ENCODE measurements at regions of chr3 and their contacts with region 1.

Region 1: DNA sequence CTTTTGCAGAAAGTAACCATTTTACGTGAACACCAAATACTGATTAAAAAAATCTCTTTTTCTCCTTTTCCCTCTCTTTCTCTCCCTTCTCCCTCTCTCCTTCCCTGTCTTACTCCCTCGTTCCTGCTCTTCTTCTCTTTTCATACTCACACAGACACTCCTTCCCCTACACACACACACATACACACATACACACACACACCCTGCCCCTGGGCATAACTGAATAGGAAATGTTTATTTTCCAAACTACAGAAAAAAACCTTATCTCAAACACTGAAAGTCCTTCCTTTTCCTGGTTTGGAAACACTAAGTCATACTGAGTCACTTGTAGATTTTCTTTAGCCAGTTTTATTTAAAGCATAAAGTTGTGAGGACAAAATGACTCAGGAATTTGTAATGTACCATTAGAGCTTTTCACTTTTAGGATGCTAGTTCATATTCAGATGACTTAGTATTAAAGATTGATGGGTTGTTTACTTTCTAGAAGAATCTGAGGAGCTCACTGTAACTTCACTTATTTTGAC is 62.4 kb downstream of the MBNL1 start:
- DNase-seq: no peak
- ATAC-seq: peak; percentile 47
- H3K4me3 Mint-ChIP-seq: peak overlapping the region; percentile 31
- H3K27ac Mint-ChIP-seq: peak overlapping the region; percentile 93
- H3K4me1 Mint-ChIP-seq: peaks cover 88% of the 10 kb centered on the region
- H3K27me3 Mint-ChIP-seq: no peaks in the 10 kb centered on the region

Region 2: DNA sequence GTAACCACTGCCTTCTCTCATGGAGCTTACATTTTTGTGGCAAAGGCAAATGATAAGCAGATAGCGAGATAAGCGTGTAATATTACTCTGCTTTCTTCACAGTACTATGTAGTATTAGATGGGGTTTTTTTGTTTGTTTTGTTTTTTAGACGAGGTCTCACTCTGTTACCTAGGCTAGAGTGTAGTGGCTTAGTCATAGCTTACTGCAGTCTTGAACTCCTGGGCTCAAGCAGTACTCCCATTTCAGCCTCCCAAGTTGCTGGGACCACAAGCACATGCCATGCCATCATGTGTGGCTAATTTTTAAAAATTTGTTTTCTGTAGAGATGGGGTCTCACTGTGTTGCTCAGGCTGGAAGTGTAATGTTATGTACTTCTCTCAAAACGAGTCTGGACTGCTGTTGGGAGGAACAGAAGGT is 39.4 kb before region 1 on chr3:
- CTCF ChIA-PET with region 1: interaction called, 3 read pairs
- POLR2A ChIA-PET with region 1: no interaction called
- intact Hi-C with region 1: loop called in 1 of 2 experiments (anchors 2 kb)
- DNase-seq: no peak
- ATAC-seq: peak; percentile 64
- H3K4me3 Mint-ChIP-seq: peak overlapping the region; percentile 55
- H3K27ac Mint-ChIP-seq: peak overlapping the region; percentile 68
- H3K4me1 Mint-ChIP-seq: peaks cover 73% of the 10 kb centered on the region
- H3K27me3 Mint-ChIP-seq: no peaks in the 10 kb centered on the region

Region 3: GRCh38 chr3:152298393-152299242 is 32.5 kb before region 1 on chr3:
- CTCF ChIA-PET with region 1: interaction called, 3 read pairs
- POLR2A ChIA-PET with region 1: interaction called, 4 read pairs
- intact Hi-C with region 1: loop called in 1 of 2 experiments (anchors 2 kb)
- DNase-seq: peak; percentile 70
- ATAC-seq: peak; percentile 87
- H3K4me3 Mint-ChIP-seq: peak overlapping the region; percentile 69
- H3K27ac Mint-ChIP-seq: peak overlapping the region; percentile 79
- H3K4me1 Mint-ChIP-seq: peaks cover 75% of the 10 kb centered on the region
- H3K27me3 Mint-ChIP-seq: no peaks in the 10 kb centered on the region

Region 4: GRCh38 chr3:152350139-152350538 is 19.1 kb after region 1 on chr3:
- CTCF ChIA-PET with region 1: interaction called, 4 read pairs
- POLR2A ChIA-PET with region 1: no interaction called
- intact Hi-C with region 1: loop called in 1 of 2 experiments (anchors 2 kb)
- DNase-seq: no peak
- ATAC-seq: peak; percentile 20
- H3K4me3 Mint-ChIP-seq: no peak overlapping the region
- H3K27ac Mint-ChIP-seq: no peak overlapping the region
- H3K4me1 Mint-ChIP-seq: peaks cover 40% of the 10 kb centered on the region
- H3K27me3 Mint-ChIP-seq: no peaks in the 10 kb centered on the region

Region 5: GRCh38 chr3:152436707-152437590 is 105.9 kb after region 1 on chr3:
- CTCF ChIA-PET with region 1: no interaction called
- POLR2A ChIA-PET with region 1: no interaction called
- intact Hi-C with region 1: no loop called
- DNase-seq: no peak
- ATAC-seq: no peak
- H3K4me3 Mint-ChIP-seq: no peak overlapping the region
- H3K27ac Mint-ChIP-seq: peak overlapping the region; percentile 65
- H3K4me1 Mint-ChIP-seq: peaks cover 63% of the 10 kb centered on the region
- H3K27me3 Mint-ChIP-seq: no peaks in the 10 kb centered on the region

Measured in activated CD4-positive, alpha-beta T cell treated with anti-CD3 and anti-CD28 coated beads for 36 hours (primary cell).